ENCODE measurements at regions of chr9 and their contacts with region 1.

Region 1: GRCh38 chr9:73200694-73201452 is 49.2 kb downstream of the ANXA1 start:
- DNase-seq: no peak
- ATAC-seq: no peak
- H3K4me3 Mint-ChIP-seq: no peak overlapping the region
- H3K27ac Mint-ChIP-seq: no peak overlapping the region
- H3K4me1 Mint-ChIP-seq: no peaks in the 10 kb centered on the region
- H3K27me3 Mint-ChIP-seq: peaks cover 8% of the 10 kb centered on the region
- CTCF ChIP-seq: peak; percentile 67

Region 2: GRCh38 chr9:73216100-73216499 is 15.2 kb after region 1 on chr9:
- CTCF ChIA-PET with region 1: interaction called, 13 read pairs
- POLR2A ChIA-PET with region 1: no interaction called
- intact Hi-C with region 1: no loop called
- DNase-seq: no peak
- ATAC-seq: no peak
- H3K4me3 Mint-ChIP-seq: no peak overlapping the region
- H3K27ac Mint-ChIP-seq: no peak overlapping the region
- H3K4me1 Mint-ChIP-seq: peaks cover 30% of the 10 kb centered on the region
- H3K27me3 Mint-ChIP-seq: peaks cover 20% of the 10 kb centered on the region
- CTCF ChIP-seq: no peak

Measured in activated CD8-positive, alpha-beta T cell treated with anti-CD3 and anti-CD28 coated beads for 36 hours (primary cell).